A673 (cell line): ENCODE measurements at regions of chr11 and their contacts with region 1.

Region 1: DNA sequence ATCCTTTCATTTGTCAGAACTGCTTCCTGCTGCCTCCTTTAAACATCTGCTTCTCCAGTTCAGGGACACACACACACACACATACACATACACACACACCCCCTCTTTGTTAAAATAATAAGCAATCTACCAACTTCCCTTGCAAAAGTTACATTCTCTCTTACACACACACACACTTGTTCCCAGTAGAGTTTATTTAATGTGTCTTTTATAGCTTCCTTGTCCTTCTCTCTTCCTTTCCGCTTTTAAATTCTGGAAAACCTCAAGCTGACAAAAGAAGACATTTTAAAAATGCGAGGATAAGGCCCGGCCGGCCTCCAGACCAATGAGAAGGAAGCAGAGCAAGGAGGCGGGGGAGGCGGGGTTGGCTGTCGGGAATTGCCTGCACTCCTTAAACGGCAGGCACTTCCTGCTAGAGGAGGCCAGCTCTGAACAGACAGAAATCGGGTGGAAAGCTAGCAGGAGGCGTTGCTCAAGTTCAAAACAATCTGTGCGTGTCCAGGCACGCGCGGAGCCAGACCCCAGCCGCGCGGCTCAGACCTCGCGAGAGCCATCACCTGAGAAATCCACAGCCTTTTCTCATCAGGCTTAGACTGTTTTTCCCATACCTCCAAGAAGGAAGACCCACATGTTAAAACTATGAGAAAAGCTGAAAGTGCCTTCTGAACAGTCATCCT is 99.9 kb downstream of the MAML2 start:
- DNase-seq: peak; percentile 100
- H3K4me3 ChIP-seq: peak overlapping the region; percentile 37
- H3K27ac ChIP-seq: peak overlapping the region; percentile 90
- H3K4me1 ChIP-seq: peaks cover 61% of the 10 kb centered on the region
- H3K27me3 ChIP-seq: no peaks in the 10 kb centered on the region
- CTCF ChIP-seq: no peak

Region 2: DNA sequence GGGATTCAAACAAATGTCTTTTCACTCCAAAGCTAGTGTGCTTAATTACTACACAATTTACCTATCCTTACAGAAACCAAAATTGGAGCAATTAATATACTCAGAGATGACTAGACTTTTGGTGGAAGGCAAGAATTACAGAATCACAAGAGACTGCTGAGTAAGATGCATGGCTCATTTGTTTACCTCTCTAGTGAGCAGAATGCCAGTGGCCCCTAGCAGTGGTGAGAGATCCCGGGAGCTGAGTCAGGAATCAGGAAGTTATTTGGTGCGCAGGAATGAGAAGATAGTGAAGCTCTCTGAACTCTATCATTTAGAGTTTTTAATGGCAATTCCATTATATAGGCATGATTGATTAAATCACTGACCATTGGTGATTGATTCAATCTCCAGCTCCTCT is 823.2 kb before region 1 on chr11:
- CTCF ChIA-PET with region 1: no interaction called
- POLR2A ChIA-PET with region 1: no interaction called
- intact Hi-C with region 1: no loop called
- DNase-seq: no peak
- H3K4me3 ChIP-seq: no peak overlapping the region
- H3K27ac ChIP-seq: no peak overlapping the region
- H3K4me1 ChIP-seq: no peaks in the 10 kb centered on the region
- H3K27me3 ChIP-seq: no peaks in the 10 kb centered on the region
- CTCF ChIP-seq: no peak

Region 3: GRCh38 chr11:95849087-95849825 is 393.9 kb before region 1 on chr11:
- CTCF ChIA-PET with region 1: interaction called, 10 read pairs
- POLR2A ChIA-PET with region 1: no interaction called
- intact Hi-C with region 1: loop called (anchors 2 kb)
- DNase-seq: peak; percentile 77
- H3K4me3 ChIP-seq: no peak overlapping the region
- H3K27ac ChIP-seq: no peak overlapping the region
- H3K4me1 ChIP-seq: no peaks in the 10 kb centered on the region
- H3K27me3 ChIP-seq: no peaks in the 10 kb centered on the region
- CTCF ChIP-seq: peak; percentile 66

Region 4: DNA sequence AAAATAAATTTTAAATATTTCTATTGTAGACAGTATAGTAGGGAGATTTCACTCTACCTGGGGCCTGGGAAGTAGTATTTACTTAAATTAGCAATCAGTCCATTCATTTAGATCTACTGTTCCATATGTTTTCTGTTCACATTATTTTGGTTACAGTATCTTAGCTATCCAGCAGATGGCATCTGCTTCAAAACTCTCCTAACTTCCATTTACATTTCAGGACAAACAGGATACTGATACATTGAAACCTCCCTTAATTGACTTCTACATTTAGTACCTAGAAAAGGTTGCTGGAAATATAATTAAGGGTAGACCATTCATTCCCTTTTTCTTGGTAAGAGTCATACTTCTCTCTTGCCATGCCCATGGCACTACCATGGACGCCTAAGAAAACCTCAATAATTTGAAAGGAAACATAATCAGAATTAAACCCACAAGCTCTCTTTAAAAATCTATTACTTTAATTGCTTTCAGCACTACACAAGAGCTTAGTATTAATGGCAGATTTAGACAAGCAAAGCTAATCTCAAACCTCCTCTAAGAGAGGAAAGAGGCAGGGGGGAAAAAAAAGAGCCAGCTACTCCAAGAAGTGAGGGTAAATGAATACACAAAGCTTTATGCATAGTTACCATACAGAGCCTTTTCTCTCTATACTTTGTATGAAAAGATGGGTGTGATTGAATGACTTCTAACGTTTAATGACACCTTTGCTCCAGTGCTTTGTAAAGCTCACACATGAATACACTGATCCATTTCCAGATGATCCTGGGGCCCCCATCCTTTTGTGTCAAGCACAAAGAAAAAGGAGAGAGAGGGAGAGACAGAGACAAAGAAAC is 188.0 kb before region 1 on chr11:
- CTCF ChIA-PET with region 1: interaction called, 3 read pairs
- POLR2A ChIA-PET with region 1: no interaction called
- intact Hi-C with region 1: loop called (anchors 2 kb)
- DNase-seq: peak; percentile 70
- H3K4me3 ChIP-seq: no peak overlapping the region
- H3K27ac ChIP-seq: no peak overlapping the region
- H3K4me1 ChIP-seq: peaks cover 38% of the 10 kb centered on the region
- H3K27me3 ChIP-seq: no peaks in the 10 kb centered on the region
- CTCF ChIP-seq: peak; percentile 79

Region 5: GRCh38 chr11:96306933-96307775 is 64.0 kb after region 1 on chr11:
- CTCF ChIA-PET with region 1: no interaction called
- POLR2A ChIA-PET with region 1: no interaction called
- intact Hi-C with region 1: loop called (anchors 1 kb)
- DNase-seq: peak; percentile 97
- H3K4me3 ChIP-seq: peak overlapping the region; percentile 36
- H3K27ac ChIP-seq: peak overlapping the region; percentile 83
- H3K4me1 ChIP-seq: peaks cover 84% of the 10 kb centered on the region
- H3K27me3 ChIP-seq: no peaks in the 10 kb centered on the region
- CTCF ChIP-seq: no peak

Region 6: DNA sequence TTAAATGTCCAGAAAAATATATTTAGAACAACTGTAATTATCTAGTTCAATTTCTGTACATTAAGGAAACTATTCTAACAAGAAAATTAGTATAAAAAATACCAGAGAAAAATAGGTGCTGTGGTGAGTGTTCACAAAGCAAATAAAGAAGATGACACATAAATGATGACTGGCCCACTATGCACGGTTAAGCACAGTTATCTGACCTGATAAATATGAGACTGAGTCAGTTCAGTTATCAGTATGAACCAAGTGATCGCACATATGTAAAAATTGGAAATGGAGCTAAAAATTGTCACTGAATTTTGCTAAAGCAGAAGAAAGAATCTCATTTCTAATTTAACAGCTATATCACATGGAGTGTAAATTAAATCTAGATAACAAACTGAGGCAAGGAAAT is 118.7 kb after region 1 on chr11:
- CTCF ChIA-PET with region 1: no interaction called
- POLR2A ChIA-PET with region 1: no interaction called
- intact Hi-C with region 1: no loop called
- DNase-seq: no peak
- H3K4me3 ChIP-seq: no peak overlapping the region
- H3K27ac ChIP-seq: no peak overlapping the region
- H3K4me1 ChIP-seq: no peaks in the 10 kb centered on the region
- H3K27me3 ChIP-seq: no peaks in the 10 kb centered on the region
- CTCF ChIP-seq: no peak

Region 7: GRCh38 chr11:96567176-96567575 is 324.1 kb after region 1 on chr11:
- CTCF ChIA-PET with region 1: no interaction called
- POLR2A ChIA-PET with region 1: no interaction called
- intact Hi-C with region 1: no loop called
- DNase-seq: peak; percentile 9
- H3K4me3 ChIP-seq: no peak overlapping the region
- H3K27ac ChIP-seq: no peak overlapping the region
- H3K4me1 ChIP-seq: no peaks in the 10 kb centered on the region
- H3K27me3 ChIP-seq: no peaks in the 10 kb centered on the region
- CTCF ChIP-seq: no peak